Cardiac septum (tissue), 1 donor: ENCODE measurements at regions of chr11 and their contacts with region 1.

Region 1: DNA sequence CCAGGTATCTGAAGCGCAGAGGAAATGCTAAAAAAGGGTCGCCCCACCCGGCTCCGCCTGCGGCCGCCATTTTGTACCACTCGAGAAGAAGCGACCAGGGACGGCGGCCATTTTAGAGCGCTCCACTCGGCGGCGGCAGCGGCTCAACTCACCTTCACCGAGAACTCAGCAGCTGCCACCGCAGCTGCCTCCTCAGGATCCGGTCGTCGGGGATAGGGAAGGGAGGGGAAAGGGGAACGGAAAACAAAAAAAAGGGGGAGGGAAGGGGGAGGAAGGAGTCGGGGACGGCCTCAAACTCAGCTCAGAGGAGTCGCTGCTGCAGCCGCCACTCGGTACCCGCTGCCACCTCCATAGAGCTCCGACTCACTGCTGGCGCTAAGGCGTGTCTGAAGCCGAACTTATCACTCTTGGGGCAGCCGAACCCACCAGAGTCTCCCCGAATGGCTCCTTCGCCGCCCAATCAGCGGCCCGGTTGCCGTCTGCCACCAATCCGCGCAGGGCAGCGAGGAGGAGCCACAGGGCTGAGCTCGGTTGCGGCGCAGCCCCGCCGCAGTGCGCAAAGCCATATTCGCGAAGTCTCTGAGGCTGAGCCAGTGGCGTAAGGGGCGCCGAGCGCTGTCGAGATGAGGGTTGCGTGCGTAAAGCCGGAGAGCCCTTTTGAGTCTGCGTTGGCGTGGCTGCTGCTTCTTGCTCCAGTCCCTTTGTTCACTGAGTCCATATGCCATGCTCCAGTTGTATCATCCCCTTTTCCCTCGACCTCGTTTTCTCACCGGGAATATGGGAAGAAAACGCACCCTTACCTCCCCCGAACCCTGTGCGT is at the start of gene EIF4G2:
- DNase-seq: peak; percentile 99
- total RNA-seq, gene EIF4G2: 765 TPM

Region 2: DNA sequence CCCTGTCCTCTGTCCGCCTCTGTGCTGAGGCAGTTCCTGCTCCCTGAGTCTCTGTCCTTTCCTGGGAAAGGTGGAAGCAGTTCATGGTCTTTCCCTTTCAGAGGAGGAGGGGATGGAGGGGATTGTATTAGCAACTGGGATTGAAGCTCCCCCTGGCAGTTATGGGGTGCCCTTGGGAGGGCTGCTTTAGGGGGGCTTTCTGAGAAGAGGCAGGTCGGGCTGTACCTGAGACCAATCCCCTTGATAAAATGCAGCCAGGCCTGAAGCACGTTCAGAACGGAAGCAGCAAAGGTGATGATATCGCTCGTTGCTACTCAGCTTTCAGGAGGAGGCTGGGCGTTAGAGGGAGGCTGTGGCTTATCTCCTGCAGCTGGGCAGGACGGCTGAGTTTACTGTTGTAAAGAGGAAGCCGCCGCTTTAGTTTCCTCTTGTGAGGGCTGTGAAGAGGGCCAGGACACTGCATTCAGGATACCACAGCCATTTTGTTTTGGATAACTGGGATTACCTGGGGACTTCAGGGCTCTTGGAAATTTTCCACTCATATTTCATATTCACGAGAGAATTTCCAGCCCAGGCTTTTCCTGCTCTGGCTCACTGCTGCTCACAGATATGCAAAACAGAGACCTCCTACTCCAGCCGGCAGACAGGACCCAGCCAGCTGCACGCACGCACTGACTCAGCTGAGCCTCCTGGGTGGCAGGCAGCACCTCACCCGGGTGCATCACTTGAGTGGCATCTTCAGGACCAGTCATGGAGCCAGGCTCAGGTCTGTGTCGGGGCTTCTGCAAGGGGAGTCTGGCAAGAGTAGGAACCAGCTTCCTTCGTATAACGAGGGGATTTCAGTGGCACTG is 352.9 kb before region 1 on chr11:
- intact Hi-C with region 1: no loop called
- DNase-seq: no peak

Region 3: GRCh38 chr11:10770626-10771254 is 38.0 kb before region 1 on chr11:
- intact Hi-C with region 1: loop called (anchors 5 kb)
- DNase-seq: no peak

Region 4: GRCh38 chr11:10857709-10858438 is 49.1 kb after region 1 on chr11 and contains the start of gene ZBED5:
- intact Hi-C with region 1: loop called (anchors 1 kb)
- DNase-seq: peak; percentile 99
- total RNA-seq, gene ZBED5: 38.8 TPM

Region 5: GRCh38 chr11:10899121-10899830 is 90.5 kb after region 1 on chr11:
- intact Hi-C with region 1: loop called (anchors 2 kb)
- DNase-seq: no peak

Region 6: DNA sequence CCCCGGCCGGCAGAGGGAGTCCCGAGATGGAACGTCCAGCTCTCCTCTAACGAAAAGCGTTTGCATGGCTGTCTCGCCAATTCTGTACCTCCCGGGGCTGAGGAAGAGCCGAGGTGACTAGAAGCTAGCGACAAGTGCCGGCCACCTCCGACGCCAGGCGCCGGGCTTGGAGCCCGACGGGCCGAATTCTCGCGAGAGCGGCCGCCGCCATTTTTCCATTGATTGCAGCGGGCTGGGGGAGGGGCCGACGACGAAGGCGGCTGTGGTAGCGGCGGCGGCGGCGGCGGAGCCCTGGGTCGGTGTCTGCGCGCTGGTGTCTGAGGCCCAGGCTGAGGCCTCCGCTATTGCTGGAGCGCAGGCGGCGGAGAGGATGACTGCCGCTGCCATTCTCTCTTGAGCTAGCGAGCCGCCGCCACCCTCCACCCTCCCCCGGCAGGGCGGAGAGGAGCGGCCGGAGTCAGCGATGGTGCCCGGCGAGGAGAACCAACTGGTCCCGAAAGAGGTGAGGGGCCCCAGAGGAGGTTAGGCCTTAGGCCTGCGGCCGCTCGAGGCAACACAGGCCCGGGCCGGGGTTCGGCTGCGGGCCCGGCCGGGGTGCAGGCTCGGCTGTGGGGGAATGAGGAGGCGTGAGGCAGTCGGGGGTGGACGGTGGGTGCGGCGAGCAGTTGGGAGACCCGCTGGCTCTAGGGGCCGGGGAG is 1033.1 kb after region 1 on chr11 and contains the start of gene USP47:
- intact Hi-C with region 1: loop called (anchors 5 kb)
- DNase-seq: peak; percentile 96
- total RNA-seq, gene USP47: 61.6 TPM